Body of pancreas (tissue), 4 donors: ENCODE measurements at regions of chr1 and their contacts with region 1.

Region 1: GRCh38 chr1:3012456-3013291 is 8.6 kb upstream of the ACTRT2 start:
- DNase-seq: peak; percentile 61 to 82 (median 72)
- ATAC-seq: peak; percentile 82
- H3K4me3 ChIP-seq: no peak overlapping the region
- H3K27ac ChIP-seq: peak overlapping the region in 3 of 4 donors; percentile 45 to 67 (median 49)
- H3K4me1 ChIP-seq: peaks cover 22% of the 10 kb centered on the region
- H3K27me3 ChIP-seq: no peaks in the 10 kb centered on the region
- CTCF ChIP-seq: peak; percentile 54 to 98 (median 65)
- POLR2A ChIP-seq: no peak

Region 2: GRCh38 chr1:3055051-3055450 is 42.4 kb after region 1 on chr1:
- intact Hi-C with region 1: loop called (anchors 5 kb)
- DNase-seq: peak in 1 of 4 donors; percentile 1
- ATAC-seq: no peak
- H3K4me3 ChIP-seq: no peak overlapping the region
- H3K27ac ChIP-seq: no peak overlapping the region
- H3K4me1 ChIP-seq: no peaks in the 10 kb centered on the region
- H3K27me3 ChIP-seq: no peaks in the 10 kb centered on the region
- CTCF ChIP-seq: no peak
- POLR2A ChIP-seq: no peak

Region 3: DNA sequence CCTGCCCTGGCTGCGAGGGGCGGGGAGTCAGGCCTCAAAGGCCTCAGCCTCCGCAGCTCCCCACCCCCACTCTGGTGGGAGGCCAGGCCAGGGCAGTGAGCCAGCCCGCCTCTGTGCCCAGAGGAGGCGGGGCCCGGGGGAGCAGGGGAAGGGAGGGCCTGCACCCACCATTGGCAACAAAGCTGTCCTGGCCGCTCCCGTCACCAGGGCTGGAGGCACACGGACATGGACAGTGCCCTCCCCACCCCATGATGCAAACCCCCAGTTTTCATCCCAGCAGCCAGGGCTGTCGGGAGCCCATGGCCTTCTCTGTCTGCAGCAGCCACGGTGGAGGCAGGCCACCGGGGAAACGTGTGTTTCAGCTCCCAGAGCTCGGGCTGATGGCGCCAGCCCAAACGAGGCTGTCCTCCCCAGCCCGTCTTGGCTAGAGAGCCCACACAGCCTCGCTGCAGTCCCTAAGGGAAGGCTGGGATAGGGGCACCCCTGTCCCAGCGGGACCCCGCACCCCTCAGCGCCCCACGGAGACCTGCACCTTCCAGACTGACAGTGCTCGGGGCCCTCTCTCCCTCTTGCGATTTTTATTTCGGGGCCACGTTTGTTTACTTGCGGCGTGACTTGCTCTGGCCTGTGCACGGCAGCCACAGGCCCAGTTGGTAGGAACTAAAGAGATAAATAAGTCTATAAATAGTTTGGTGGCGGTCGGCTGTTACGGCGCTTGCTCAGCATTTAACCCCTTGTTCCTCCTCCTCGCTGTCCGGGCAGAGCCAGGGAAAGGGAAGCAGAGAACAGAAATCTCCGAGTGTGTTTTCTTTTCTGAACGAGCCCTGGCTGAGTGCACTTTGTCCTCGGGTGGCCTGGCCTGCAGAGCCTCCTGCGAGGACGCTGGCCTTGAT is 158.1 kb after region 1 on chr1:
- intact Hi-C with region 1: no loop called
- DNase-seq: peak; percentile 89 to 94 (median 92)
- ATAC-seq: peak; percentile 81
- H3K4me3 ChIP-seq: no peak overlapping the region
- H3K27ac ChIP-seq: peak overlapping the region; percentile 90 to 97 (median 96)
- H3K4me1 ChIP-seq: peaks cover 85% of the 10 kb centered on the region
- H3K27me3 ChIP-seq: no peaks in the 10 kb centered on the region
- CTCF ChIP-seq: peak in 1 of 7 experiments; percentile 5
- POLR2A ChIP-seq: peak; percentile 52 to 65 (median 63)

Region 4: DNA sequence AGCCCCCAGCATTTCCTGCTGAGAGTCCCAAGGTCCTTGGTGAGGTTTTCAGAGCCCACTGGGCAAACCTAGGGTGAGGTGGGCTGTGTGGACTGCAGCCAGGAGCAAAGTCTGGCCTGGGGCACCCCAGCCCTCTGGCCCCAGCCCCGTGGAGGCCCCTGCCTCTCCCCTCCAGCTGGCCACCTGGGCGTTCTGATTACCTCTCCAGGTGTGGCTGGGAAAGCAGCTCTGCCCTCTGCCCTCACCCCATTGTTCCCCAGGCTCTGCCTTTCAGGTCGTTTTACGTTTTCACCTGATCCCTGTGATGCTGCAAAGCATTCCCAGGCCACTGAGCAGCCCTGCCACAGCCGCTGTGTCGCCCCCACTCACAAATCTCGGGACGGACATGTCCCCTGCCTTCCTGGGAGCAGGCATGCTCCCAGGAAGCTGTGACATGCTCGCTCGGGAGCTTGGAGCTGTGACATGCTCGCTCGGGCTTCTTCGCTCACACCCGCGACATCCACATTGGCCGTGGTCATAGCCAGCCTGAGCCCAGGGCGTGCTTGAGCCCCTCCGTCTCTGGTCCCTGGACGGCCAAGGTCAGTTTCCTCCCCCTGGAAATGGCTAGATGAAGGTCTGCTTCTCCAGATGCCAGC is 272.5 kb after region 1 on chr1:
- intact Hi-C with region 1: loop called (anchors 5 kb)
- DNase-seq: no peak
- ATAC-seq: no peak
- H3K4me3 ChIP-seq: no peak overlapping the region
- H3K27ac ChIP-seq: no peak overlapping the region
- H3K4me1 ChIP-seq: peaks cover 15% of the 10 kb centered on the region
- H3K27me3 ChIP-seq: no peaks in the 10 kb centered on the region
- CTCF ChIP-seq: no peak
- POLR2A ChIP-seq: no peak

Region 5: GRCh38 chr1:3431266-3431665 is 418.6 kb after region 1 on chr1:
- intact Hi-C with region 1: loop called (anchors 5 kb)
- DNase-seq: no peak
- ATAC-seq: no peak
- H3K4me3 ChIP-seq: no peak overlapping the region
- H3K27ac ChIP-seq: no peak overlapping the region
- H3K4me1 ChIP-seq: no peaks in the 10 kb centered on the region
- H3K27me3 ChIP-seq: no peaks in the 10 kb centered on the region
- CTCF ChIP-seq: no peak
- POLR2A ChIP-seq: no peak

Region 6: GRCh38 chr1:3530926-3531818 is 518.5 kb after region 1 on chr1:
- intact Hi-C with region 1: no loop called
- DNase-seq: peak; percentile 83 to 91 (median 89)
- ATAC-seq: peak; percentile 88
- H3K4me3 ChIP-seq: peak overlapping the region; percentile 2 to 58
- H3K27ac ChIP-seq: peak overlapping the region; percentile 46 to 78 (median 62)
- H3K4me1 ChIP-seq: peaks cover 23% of the 10 kb centered on the region
- H3K27me3 ChIP-seq: no peaks in the 10 kb centered on the region
- CTCF ChIP-seq: no peak
- POLR2A ChIP-seq: peak; percentile 20 to 82 (median 43)